ENCODE measurements at regions of chr7 and their contacts with region 1.

Region 1: DNA sequence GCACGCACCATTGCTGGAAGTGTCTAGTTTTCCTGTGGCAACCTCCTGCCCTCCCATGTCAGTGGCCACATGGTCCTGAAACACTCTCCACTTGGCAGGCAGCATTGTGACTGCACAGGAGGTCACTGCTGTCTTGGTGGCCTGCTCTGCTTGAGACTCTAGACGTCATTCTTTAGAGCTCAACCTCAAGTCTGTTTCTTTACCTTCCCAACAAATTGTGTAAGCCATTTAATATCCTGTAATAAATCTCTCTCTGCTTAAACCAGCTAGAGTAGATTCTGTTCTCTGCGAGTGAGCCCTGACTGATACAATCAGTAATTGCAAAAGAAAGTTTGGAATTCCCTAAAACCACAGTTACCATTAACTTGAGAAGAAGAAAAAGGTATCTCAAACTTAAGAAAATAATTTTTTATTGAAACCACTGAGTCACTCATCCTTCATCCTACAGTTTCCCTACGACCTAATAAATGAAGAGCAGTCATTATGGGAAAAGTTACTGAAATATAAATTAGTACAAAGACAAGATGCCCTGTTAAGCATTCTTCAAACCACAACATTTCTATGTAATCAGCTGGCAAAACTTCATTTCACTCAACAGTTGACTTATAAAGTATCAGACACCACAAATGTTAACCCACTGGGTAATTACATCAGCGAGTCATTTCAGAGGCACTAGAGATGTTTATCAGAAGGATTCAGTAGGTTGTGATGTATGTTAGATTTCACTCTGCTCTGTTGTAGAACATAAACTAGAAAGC is 18.0 kb downstream of the SLC25A13 start:
- DNase-seq: peak; percentile 2 to 94
- H3K4me3 ChIP-seq: no peak overlapping the region
- H3K27ac ChIP-seq: peak overlapping the region; percentile 76
- H3K4me1 ChIP-seq: peaks cover 41% of the 10 kb centered on the region
- H3K27me3 ChIP-seq: no peaks in the 10 kb centered on the region
- CTCF ChIP-seq: no peak

Region 2: GRCh38 chr7:96118449-96119001 is 185.3 kb before region 1 on chr7:
- CTCF ChIA-PET with region 1: interaction called, 20 read pairs
- POLR2A ChIA-PET with region 1: no interaction called
- intact Hi-C with region 1: no loop called
- DNase-seq: no peak
- H3K4me3 ChIP-seq: no peak overlapping the region
- H3K27ac ChIP-seq: no peak overlapping the region
- H3K4me1 ChIP-seq: no peaks in the 10 kb centered on the region
- H3K27me3 ChIP-seq: no peaks in the 10 kb centered on the region
- CTCF ChIP-seq: no peak

Measured in PC-9 (cell line).